Posterior vena cava (tissue), 2 donors: ENCODE measurements at regions of chr5 and their contacts with region 1.

Region 1: DNA sequence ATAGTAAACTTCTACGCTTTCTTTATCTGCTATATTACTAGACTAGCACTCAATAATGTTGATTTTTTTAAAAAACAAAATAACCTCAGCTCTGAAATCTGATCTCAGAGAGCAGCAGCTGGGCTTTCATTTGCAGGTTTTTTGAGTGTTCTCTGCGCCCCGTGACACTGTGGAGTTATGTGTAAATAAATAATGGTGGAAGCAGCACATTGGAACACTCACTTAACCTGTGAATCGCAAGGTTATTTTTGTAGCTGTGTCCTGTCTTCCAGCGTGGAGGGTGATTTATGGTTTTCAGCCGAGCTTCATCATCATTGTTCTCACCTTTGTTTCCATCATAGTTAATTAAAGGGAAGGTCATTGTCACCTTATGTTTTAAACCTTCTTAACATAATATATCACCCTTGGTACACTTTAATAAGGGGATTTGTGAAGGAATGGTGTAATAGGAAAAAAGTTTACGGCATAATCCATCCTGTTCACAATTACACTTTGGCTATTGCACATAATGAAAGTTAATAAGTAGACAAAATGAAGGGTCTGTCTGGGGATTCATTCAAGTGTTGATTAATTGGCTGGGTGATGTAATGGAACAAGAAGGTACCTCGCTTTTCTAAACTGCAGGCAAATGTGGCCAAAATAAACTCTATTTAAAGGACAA is 493.3 kb upstream of the ADAMTS16 start:
- DNase-seq: no peak

Region 2: DNA sequence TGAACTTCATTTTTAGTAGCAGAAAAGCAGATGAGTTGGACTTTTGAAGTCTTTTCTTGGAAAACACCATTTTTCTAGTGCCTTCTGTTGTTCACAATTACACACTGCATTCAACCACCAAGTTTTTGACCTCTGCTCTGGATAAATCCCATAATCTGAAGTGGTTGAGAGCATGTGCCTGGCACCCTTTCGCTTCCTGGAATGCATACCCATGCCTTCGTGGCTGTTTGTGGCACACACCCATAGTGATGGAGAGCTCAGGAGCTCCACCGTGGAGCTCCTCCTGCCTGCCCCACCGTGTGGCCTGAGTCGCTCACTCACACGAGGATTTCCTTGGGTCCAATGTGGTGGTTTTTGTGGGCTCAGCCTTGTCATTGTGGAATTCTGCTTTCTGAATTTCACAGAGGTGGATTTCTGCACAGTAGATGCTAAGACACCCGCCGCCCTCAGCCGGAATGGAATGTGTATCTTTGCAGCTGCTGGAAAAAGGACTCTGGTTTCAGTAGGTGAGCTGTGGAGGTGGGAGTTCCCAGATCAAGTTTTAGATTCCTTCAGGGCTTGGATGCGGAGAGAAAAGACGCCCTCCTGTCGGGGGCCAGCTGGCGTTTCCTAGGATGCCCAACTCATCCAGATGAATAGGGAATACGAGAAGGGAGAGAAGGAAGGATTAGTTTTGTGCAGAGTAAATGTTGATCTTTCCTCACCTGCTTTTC is 550.8 kb before region 1 on chr5:
- intact Hi-C with region 1: loop called in 1 of 2 experiments (anchors 5 kb)
- DNase-seq: no peak

Region 3: GRCh38 chr5:6143523-6143922 is 1496.7 kb after region 1 on chr5:
- intact Hi-C with region 1: no loop called
- DNase-seq: no peak